Activated naive CD4-positive, alpha-beta T cell treated with anti-CD3 and anti-CD28 coated beads for 36 hours (primary cell): ENCODE measurements at regions of chrX and their contacts with region 1.

Region 1: DNA sequence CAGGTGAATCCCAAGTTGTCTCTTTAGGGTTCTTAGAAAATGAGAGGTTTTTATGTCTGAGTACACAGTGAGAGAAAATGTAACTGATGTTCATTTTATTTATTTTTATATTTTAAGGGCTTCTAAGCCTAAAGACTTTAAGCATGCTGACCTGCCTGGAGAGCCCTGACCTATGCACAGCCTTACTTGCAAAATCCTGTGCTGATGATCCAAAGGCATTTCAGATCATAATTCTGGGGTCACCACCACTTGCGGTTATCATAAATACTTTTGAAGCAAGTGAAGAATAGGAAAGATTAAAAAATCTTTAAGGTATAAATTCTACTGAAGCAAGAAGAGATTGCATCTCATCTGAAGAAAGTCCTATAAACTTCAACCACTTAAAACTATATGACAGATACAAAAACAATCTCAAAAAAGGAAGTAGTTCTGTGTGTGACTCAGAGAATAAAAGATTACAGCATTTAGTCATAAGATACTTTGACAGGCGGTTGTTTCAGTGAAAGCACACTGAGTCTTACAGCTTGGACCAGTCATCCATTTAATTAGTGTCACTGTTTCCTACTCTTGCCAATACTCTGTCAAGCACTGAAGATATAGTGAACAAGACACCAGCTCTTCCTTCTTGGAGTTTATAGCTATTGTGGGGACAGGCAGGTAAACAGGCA is 245.2 kb upstream of the DIPK2B start:
- DNase-seq: no peak
- H3K4me3 Mint-ChIP-seq: no peak overlapping the region
- H3K27ac Mint-ChIP-seq: no peak overlapping the region
- H3K4me1 Mint-ChIP-seq: peaks cover 5% of the 10 kb centered on the region
- H3K27me3 Mint-ChIP-seq: no peaks in the 10 kb centered on the region

Region 2: GRCh38 chrX:45274576-45274975 is 171.3 kb before region 1 on chrX:
- CTCF ChIA-PET with region 1: no interaction called
- intact Hi-C with region 1: no loop called
- DNase-seq: no peak
- H3K4me3 Mint-ChIP-seq: no peak overlapping the region
- H3K27ac Mint-ChIP-seq: no peak overlapping the region
- H3K4me1 Mint-ChIP-seq: no peaks in the 10 kb centered on the region
- H3K27me3 Mint-ChIP-seq: peaks cover 2% of the 10 kb centered on the region

Region 3: DNA sequence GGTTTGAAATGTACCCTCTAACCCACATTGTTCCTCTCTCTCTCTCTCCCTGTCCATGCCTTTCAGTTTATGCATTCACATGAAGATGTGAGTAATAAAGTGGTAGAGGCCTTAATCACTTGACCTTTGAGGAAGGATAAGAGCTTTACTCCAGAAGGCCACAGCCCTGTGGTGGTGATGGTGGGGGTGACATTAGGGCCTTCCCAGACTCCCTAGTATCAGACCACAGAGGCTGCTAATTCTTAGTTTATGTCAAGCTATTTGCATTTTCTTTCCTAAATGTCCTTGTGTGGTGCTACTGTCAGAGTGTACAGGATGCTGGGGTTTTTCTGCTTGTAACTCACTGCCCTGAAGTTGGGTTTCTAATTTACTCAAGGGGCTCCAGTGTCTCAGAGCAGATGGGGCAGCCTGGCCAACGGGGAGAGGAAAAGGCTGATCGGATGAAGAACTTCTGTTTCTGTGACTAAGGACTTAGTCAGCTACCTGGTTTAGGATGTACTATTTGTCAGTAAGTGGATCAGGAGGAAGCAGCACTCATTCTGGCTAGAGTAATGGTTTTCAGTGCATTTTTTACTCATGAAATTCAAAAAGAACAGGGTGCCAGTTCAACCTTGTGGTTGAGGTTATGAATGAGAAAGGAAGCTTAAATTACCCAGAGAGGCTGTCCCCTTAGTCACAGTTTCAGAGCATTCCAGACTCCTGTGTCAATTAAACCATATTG is 264.4 kb after region 1 on chrX:
- CTCF ChIA-PET with region 1: no interaction called
- intact Hi-C with region 1: loop called (anchors 10 kb)
- DNase-seq: peak; percentile 71
- H3K4me3 Mint-ChIP-seq: no peak overlapping the region
- H3K27ac Mint-ChIP-seq: peak overlapping the region; percentile 69
- H3K4me1 Mint-ChIP-seq: peaks cover 42% of the 10 kb centered on the region
- H3K27me3 Mint-ChIP-seq: no peaks in the 10 kb centered on the region